Activated B cell treated with CpG ODN at 0.5 μM for 24 hours (primary cell): ENCODE measurements at regions of chr14 and their contacts with region 1.

Region 1: GRCh38 chr14:88562831-88563686 is at the start of gene ZC3H14:
- DNase-seq: peak; percentile 87
- ATAC-seq: peak; percentile 97
- H3K4me3 Mint-ChIP-seq: peak within 1 kb of the TSS; percentile 96
- H3K27ac Mint-ChIP-seq: peak within 1 kb of the TSS; percentile 86
- H3K4me1 Mint-ChIP-seq: peaks cover 18% of the 10 kb centered on the region
- H3K27me3 Mint-ChIP-seq: peaks cover 6% of the 10 kb centered on the region
- CTCF ChIP-seq: no peak
- total RNA-seq, gene ZC3H14: 38.7 and 45.0 TPM in 2 replicates

Region 2: DNA sequence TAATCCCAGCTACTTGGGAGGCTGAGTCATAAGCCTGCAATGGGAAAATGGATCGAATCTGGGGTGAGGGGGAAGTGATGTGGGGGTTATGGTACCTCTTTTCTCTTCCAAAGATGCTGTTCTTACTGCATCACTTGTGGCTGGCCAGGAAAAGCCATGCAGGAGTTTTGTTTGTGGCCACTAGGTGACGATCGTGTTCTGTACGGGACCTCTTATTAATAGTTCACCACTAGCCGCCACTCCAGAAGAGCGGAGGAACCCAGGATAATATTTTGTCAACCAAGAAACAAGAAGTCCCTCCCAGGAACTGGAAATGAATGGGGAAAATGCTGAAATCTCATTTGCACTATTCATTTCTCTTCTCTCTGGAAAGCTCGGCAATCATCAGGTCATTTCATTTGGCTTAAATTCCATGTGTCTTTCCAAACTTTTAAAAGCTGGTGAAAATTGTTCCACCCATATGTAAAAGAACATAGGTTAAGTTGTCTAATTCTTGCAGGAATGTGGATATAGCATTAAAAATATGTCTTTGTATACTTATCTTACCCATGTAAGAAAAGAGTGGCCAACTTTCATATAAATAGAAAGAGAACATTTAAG is 549.2 kb before region 1 on chr14:
- CTCF ChIA-PET with region 1: no interaction called
- POLR2A ChIA-PET with region 1: no interaction called
- intact Hi-C with region 1: loop called (anchors 5 kb)
- DNase-seq: no peak
- ATAC-seq: peak; percentile 83
- H3K4me3 Mint-ChIP-seq: no peak overlapping the region
- H3K27ac Mint-ChIP-seq: peak overlapping the region; percentile 2
- H3K4me1 Mint-ChIP-seq: peaks cover 42% of the 10 kb centered on the region
- H3K27me3 Mint-ChIP-seq: no peaks in the 10 kb centered on the region
- CTCF ChIP-seq: peak; percentile 39

Region 3: GRCh38 chr14:88323523-88324199 is 239.4 kb before region 1 on chr14:
- CTCF ChIA-PET with region 1: no interaction called
- POLR2A ChIA-PET with region 1: no interaction called
- intact Hi-C with region 1: loop called (anchors 5 kb)
- DNase-seq: peak; percentile 30
- ATAC-seq: peak; percentile 80
- H3K4me3 Mint-ChIP-seq: peak overlapping the region; percentile 85
- H3K27ac Mint-ChIP-seq: no peak overlapping the region
- H3K4me1 Mint-ChIP-seq: peaks cover 7% of the 10 kb centered on the region
- H3K27me3 Mint-ChIP-seq: peaks cover 44% of the 10 kb centered on the region
- CTCF ChIP-seq: no peak

Region 4: GRCh38 chr14:88521821-88522220 is 41.2 kb before region 1 on chr14:
- CTCF ChIA-PET with region 1: no interaction called
- POLR2A ChIA-PET with region 1: no interaction called
- intact Hi-C with region 1: no loop called
- DNase-seq: no peak
- ATAC-seq: no peak
- H3K4me3 Mint-ChIP-seq: no peak overlapping the region
- H3K27ac Mint-ChIP-seq: no peak overlapping the region
- H3K4me1 Mint-ChIP-seq: no peaks in the 10 kb centered on the region
- H3K27me3 Mint-ChIP-seq: peaks cover 19% of the 10 kb centered on the region
- CTCF ChIP-seq: no peak

Region 5: DNA sequence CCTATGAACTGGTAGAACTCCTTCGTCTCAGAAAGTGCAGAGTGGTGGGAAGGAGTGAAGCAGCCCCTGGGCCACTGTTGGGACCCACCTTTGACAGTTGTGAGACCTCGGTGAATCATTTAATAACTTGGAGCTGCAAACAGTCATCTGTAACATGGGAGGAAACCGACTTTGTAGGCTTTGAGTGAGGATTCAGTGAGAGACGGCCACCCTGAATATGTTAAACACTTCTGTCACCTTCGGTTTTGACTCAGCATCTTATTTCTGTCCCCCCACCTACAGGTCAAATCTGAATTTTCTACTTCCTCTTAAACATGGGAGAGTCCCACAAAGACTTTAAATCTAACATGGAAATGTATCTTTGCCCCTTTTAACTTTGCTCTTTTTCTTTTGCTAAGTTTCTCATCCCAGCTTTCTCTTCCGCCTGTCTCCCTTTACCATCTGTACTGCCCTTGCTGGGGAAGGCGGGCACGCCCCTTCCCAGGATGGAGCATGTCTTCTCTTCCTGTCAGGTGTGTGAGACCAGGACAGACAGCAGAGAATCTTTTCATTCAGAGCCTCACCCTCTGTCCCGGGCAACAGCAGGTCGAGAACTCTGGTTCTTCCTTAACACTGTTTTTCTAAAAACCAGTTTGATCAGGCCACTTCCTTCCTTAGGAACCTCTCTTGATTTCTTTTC is 36.8 kb after region 1 on chr14:
- CTCF ChIA-PET with region 1: no interaction called
- POLR2A ChIA-PET with region 1: no interaction called
- intact Hi-C with region 1: loop called (anchors 2 kb)
- DNase-seq: no peak
- ATAC-seq: peak; percentile 84
- H3K4me3 Mint-ChIP-seq: peak overlapping the region; percentile 12
- H3K27ac Mint-ChIP-seq: peak overlapping the region; percentile 78
- H3K4me1 Mint-ChIP-seq: peaks cover 25% of the 10 kb centered on the region
- H3K27me3 Mint-ChIP-seq: no peaks in the 10 kb centered on the region
- CTCF ChIP-seq: no peak

Region 6: GRCh38 chr14:88613552-88614010 is 50.5 kb after region 1 on chr14:
- CTCF ChIA-PET with region 1: no interaction called
- POLR2A ChIA-PET with region 1: no interaction called
- intact Hi-C with region 1: no loop called
- DNase-seq: no peak
- ATAC-seq: peak; percentile 31
- H3K4me3 Mint-ChIP-seq: no peak overlapping the region
- H3K27ac Mint-ChIP-seq: no peak overlapping the region
- H3K4me1 Mint-ChIP-seq: peaks cover 17% of the 10 kb centered on the region
- H3K27me3 Mint-ChIP-seq: no peaks in the 10 kb centered on the region
- CTCF ChIP-seq: no peak

Region 7: GRCh38 chr14:88824314-88825077 is 261.4 kb after region 1 on chr14 and contains the start of gene TTC8:
- CTCF ChIA-PET with region 1: no interaction called
- POLR2A ChIA-PET with region 1: no interaction called
- intact Hi-C with region 1: loop called (anchors 2 kb)
- DNase-seq: peak; percentile 77
- ATAC-seq: peak; percentile 97
- H3K4me3 Mint-ChIP-seq: peak within 1 kb of the TSS; percentile 88
- H3K27ac Mint-ChIP-seq: peak within 1 kb of the TSS; percentile 100
- H3K4me1 Mint-ChIP-seq: peaks cover 14% of the 10 kb centered on the region
- H3K27me3 Mint-ChIP-seq: peaks cover 11% of the 10 kb centered on the region
- CTCF ChIP-seq: no peak
- total RNA-seq, gene TTC8: 4.8 and 6.0 TPM in 2 replicates